ENCODE measurements at regions of chr3 and their contacts with region 1.

Region 1: DNA sequence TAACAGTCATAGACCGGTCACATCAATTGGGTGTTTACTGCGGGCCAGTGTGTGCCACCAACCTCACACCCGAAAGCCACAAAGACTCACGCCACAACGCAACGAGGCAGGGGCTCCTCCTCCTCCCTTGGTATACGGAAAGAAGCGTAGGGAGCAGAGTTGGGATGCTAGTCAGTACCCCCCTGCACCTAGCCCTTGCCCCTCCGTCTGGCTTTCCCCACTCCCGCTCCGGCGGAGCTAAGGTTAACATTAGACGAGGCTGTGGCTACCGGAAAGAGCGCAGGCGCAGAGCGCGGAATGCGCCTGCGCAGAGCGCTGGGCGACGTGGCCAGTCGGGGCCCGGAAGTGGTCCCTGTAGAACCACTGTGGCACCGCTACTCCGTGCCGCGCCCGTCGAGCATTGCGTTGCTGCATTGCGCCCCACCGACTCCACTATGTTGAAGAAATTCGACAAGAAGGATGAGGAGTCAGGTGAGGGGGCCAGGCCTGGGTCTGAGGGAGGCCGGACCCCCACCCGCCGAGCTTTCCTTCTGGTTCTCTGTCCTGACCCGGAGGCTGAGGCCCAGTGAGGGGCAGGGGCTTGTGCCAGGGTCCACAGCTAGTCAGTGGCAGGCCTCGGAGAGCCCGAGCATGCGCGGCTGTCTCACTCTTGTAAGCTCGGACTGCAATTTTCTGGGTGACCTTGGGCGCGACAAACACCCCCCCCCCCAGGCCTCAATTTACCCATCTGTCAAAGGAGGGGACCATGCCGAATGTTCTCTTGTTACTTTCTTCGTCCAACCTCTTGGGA is at the start of gene COPG1:
- DNase-seq: peak; percentile 94
- ATAC-seq: peak; percentile 92
- H3K4me3 Mint-ChIP-seq: peak within 1 kb of the TSS; percentile 99
- H3K27ac Mint-ChIP-seq: peak within 1 kb of the TSS; percentile 98
- H3K4me1 Mint-ChIP-seq: peaks cover 42% of the 10 kb centered on the region
- H3K27me3 Mint-ChIP-seq: no peaks in the 10 kb centered on the region
- total RNA-seq, gene COPG1: 131 to 138 TPM

Region 2: GRCh38 chr3:129016356-129016719 is 233.1 kb before region 1 on chr3:
- POLR2A ChIA-PET with region 1: interaction called, 14 read pairs
- DNase-seq: peak; percentile 68
- ATAC-seq: peak; percentile 91
- H3K4me3 Mint-ChIP-seq: peak overlapping the region; percentile 61
- H3K27ac Mint-ChIP-seq: peak overlapping the region; percentile 90
- H3K4me1 Mint-ChIP-seq: peaks cover 29% of the 10 kb centered on the region
- H3K27me3 Mint-ChIP-seq: no peaks in the 10 kb centered on the region

Region 3: GRCh38 chr3:129160891-129161859 is 88.3 kb before region 1 on chr3 and contains the start of gene ISY1:
- POLR2A ChIA-PET with region 1: interaction called, 17 read pairs
- DNase-seq: peak; percentile 87
- ATAC-seq: peak; percentile 81
- H3K4me3 Mint-ChIP-seq: peak within 1 kb of the TSS; percentile 93
- H3K27ac Mint-ChIP-seq: peak within 1 kb of the TSS; percentile 95
- H3K4me1 Mint-ChIP-seq: peaks cover 27% of the 10 kb centered on the region
- H3K27me3 Mint-ChIP-seq: no peaks in the 10 kb centered on the region
- total RNA-seq, gene ISY1: 52.1 to 59.0 TPM

Region 4: DNA sequence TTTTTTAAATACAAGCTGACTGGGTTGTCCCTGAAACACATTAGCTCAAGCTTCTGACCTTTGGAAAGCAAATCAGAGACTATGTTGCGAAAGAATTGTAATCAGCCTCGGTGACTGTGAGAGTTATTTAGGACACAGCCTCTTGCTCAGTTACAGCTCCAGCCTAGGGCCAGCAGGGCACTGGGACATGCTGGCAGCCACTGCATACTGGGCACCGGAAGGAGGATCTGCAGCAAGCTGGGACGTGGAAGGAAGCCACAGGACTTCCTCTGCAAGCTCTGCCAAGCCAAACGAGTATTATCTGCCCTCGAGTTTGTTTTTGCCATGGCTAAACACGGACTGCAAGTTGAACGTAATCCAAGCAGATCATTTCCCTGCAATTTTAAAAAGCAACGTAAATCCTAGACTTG is 24.5 kb before region 1 on chr3:
- POLR2A ChIA-PET with region 1: interaction called, 12 read pairs
- DNase-seq: no peak
- ATAC-seq: peak; percentile 74
- H3K4me3 Mint-ChIP-seq: peak overlapping the region; percentile 73
- H3K27ac Mint-ChIP-seq: peak overlapping the region; percentile 88
- H3K4me1 Mint-ChIP-seq: peaks cover 41% of the 10 kb centered on the region
- H3K27me3 Mint-ChIP-seq: no peaks in the 10 kb centered on the region

Region 5: DNA sequence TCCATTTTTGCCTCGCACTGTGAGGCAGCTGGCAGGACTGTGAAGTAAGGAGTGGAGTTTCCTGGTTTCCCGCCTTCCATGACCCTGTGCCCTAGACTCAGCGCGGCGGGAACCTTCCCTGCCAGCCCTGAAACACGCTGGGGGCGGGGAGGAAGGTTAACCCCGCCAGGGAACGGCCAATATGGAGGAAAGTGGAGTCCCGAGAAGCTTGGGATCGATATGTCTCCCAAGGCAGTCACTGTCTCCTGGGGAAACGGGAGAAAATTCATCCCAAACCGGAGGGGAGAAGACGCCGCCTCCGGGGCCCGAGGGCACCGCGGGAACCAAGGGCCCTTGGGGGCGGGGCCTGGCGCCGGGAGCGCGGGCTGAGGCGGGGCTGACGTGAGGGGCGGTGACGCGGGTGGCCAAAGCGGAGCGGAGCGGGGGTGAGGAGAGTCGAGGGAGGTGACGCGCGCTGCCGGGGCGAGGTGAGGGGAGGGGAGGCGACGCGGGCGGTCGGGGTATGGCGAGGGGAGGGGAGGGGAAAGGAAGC is 29.0 kb after region 1 on chr3 and contains the start of gene HMCES:
- POLR2A ChIA-PET with region 1: interaction called, 16 read pairs
- DNase-seq: peak; percentile 96
- ATAC-seq: peak; percentile 90
- H3K4me3 Mint-ChIP-seq: peak within 1 kb of the TSS; percentile 99
- H3K27ac Mint-ChIP-seq: peak within 1 kb of the TSS; percentile 97
- H3K4me1 Mint-ChIP-seq: peaks cover 40% of the 10 kb centered on the region
- H3K27me3 Mint-ChIP-seq: no peaks in the 10 kb centered on the region
- total RNA-seq, gene HMCES: 59.7 to 60.8 TPM

Region 6: DNA sequence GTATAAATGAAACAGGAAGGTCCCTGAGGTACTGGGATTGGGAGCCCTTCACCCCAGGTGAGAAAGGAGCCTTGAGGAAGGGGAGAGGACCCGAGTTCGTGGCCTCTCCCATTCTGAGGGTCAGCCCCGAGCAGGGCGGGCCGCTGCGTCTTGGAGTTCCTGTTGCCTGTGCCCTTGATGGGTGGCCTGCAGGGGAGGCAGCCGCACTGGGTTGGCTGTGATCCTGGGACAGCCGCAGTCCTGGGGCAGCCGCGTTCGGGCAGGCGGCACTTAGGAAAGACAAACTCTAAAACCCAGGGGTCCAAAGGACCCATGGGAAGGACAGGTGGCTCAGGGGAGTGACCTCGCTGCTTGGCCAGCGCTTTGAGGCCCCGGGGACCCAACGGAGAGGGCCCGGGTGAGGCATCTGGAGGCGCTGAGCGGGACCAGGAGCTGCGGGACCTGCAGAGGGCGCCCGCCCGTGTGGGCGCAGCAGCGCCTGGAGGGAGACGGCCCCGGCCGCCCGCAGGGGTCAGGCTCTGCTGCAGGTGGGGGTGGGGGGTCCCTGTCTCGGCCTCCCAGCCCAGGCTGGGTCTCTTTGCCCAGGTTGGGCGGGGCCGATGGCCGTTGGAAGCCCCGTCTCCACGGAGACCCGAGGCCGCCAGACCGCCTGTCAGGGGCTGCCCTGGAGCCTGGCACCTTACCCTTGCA is 94.3 kb after region 1 on chr3:
- POLR2A ChIA-PET with region 1: no interaction called
- DNase-seq: peak; percentile 59
- ATAC-seq: peak; percentile 88
- H3K4me3 Mint-ChIP-seq: peak overlapping the region; percentile 44
- H3K27ac Mint-ChIP-seq: no peak overlapping the region
- H3K4me1 Mint-ChIP-seq: peaks cover 8% of the 10 kb centered on the region
- H3K27me3 Mint-ChIP-seq: peaks cover 29% of the 10 kb centered on the region